HCT116 (cell line): ENCODE measurements at regions of chr13 and their contacts with region 1.

Region 1: GRCh38 chr13:27620377-27621115 is at the start of gene LNX2:
- DNase-seq: peak; percentile 90
- ATAC-seq: peak; percentile 89
- H3K4me3 ChIP-seq: peak within 1 kb of the TSS; percentile 85 to 96
- H3K27ac ChIP-seq: peak within 1 kb of the TSS; percentile 99
- H3K4me1 ChIP-seq: peaks cover 12 to 23% of the 10 kb centered on the region in 2 experiments
- H3K27me3 ChIP-seq: no peaks in the 10 kb centered on the region
- CTCF ChIP-seq: no peak
- POLR2A ChIP-seq: peak; percentile 46
- RAD21 ChIP-seq: no peak
- total RNA-seq, gene LNX2: 12.1 TPM

Region 2: GRCh38 chr13:27391471-27391870 is 229.1 kb before region 1 on chr13:
- CTCF ChIA-PET with region 1: no interaction called
- POLR2A ChIA-PET with region 1: no interaction called
- RAD21 ChIA-PET with region 1: no interaction called
- intact Hi-C with region 1: loop called (anchors 10 kb)
- DNase-seq: no peak
- ATAC-seq: no peak
- H3K4me3 ChIP-seq: no peak overlapping the region
- H3K27ac ChIP-seq: no peak overlapping the region
- H3K4me1 ChIP-seq: no peaks in the 10 kb centered on the region
- H3K27me3 ChIP-seq: no peaks in the 10 kb centered on the region
- CTCF ChIP-seq: no peak
- POLR2A ChIP-seq: no peak
- RAD21 ChIP-seq: no peak

Region 3: DNA sequence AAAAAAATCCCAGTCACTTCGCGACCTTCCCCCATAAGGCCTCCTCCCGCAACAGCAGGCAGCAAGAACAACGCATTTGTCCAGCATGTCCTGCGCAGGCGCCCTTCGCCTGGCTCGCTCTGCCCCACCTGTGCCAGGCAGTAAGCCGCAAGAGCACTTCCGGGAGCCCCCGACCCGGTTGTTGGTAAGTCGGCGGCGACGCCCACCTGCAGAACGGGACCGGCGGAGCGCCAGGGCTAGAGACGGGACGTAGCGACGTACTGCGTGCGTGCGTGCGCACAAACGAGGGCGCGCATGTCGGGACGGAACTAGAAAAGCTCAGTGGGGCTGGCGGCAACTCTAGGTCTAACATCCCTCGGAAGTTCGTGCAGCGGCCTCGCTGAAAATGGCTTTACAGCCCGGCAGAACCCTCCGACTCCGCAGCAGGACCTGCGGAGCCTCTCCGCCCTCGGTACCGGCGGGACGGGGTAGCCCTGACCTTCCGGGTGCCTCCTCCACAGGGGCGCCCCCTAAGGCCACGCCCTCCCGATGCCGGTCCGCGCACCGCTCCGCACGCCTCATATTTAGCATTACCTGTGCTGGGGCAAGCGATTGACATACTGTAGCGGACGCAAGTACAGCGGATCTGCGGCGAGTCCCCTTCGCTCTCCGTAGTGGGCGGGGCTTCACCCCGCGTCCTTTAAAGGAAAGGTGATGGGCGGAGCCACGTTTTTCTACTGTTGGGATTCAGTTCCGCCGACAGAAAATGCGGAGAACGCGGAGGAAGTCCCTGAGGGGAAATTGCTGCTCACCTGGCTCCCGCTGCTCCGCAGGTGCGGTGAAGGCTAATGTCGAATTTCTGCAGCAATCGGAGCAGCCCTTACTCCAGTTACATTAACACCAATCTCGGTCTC is 170.4 kb before region 1 on chr13 and contains the start of gene MTIF3:
- CTCF ChIA-PET with region 1: no interaction called
- POLR2A ChIA-PET with region 1: no interaction called
- RAD21 ChIA-PET with region 1: no interaction called
- intact Hi-C with region 1: loop called (anchors 5 kb)
- DNase-seq: peak; percentile 95
- ATAC-seq: peak; percentile 91
- H3K4me3 ChIP-seq: peak within 1 kb of the TSS; percentile 61 to 68
- H3K27ac ChIP-seq: peak within 1 kb of the TSS; percentile 99
- H3K4me1 ChIP-seq: peaks cover 14 to 21% of the 10 kb centered on the region in 2 experiments
- H3K27me3 ChIP-seq: no peaks in the 10 kb centered on the region
- CTCF ChIP-seq: no peak
- POLR2A ChIP-seq: peak; percentile 88
- RAD21 ChIP-seq: no peak
- total RNA-seq, gene MTIF3: 27.8 TPM

Region 4: GRCh38 chr13:27607125-27607524 is 13.4 kb before region 1 on chr13:
- CTCF ChIA-PET with region 1: no interaction called
- POLR2A ChIA-PET with region 1: interaction called, 11 read pairs
- RAD21 ChIA-PET with region 1: no interaction called
- intact Hi-C with region 1: no loop called
- DNase-seq: peak; percentile 56
- ATAC-seq: peak; percentile 58; the same call in 1 of the 2 replicates
- H3K4me3 ChIP-seq: peak overlapping the region in 1 of 2 experiments; percentile 5; a peak in 1 of 4 replicates
- H3K27ac ChIP-seq: no peak overlapping the region; the same call in 1 of the 2 replicates
- H3K4me1 ChIP-seq: peaks cover 13 to 16% of the 10 kb centered on the region in 2 experiments
- H3K27me3 ChIP-seq: no peaks in the 10 kb centered on the region
- CTCF ChIP-seq: no peak
- POLR2A ChIP-seq: no peak
- RAD21 ChIP-seq: no peak